CD8-positive, alpha-beta T cell (primary cell): ENCODE measurements at regions of chr21 and their contacts with region 1.

Region 1: DNA sequence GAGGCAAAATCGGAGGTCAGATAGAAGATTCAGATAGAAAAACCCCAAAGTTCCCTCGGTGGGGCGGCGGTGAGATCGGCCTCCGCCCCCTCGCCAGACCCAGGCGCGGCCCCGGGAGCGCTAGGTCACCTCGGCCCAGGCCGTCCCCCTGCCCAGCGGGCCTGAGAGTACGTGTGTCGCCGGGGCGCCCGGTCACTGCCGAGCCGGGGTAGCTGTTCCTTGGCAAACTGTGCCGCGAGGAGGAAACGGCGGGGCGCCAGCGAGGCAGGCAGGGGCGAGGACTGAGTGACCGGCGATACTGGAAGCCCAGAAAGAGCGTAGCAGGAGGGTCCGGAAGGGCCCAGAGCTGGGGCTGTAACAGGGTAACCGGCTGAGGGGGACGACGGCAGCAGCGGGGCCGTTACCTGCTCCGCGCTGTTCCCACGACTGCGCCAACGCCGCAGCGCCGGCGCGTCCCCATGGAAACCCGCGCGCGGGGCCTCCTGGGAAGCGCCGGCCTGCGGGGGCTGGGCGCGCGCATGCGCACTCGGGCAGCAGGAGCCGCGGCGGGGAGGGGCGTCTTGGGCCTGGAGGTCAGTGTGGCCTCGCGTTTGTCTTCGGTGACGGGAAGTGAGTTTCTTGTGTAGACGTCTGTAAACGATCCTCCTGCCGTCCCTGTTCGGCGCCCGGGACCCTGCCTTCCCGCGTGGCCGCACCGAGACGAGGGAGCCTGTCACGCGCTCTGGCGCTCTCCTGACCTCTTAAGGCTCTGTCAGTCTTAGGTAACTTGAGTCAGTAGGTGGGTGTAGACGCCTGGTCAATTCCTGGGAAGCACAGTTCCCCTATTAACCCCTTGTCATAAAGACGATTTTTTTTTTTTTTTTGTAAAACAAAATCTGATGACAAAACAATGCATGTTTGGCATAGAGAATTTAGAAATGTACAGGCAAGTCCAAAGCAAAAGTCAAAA is at the start of gene LCA5L:
- DNase-seq: peak; percentile 73 to 95 (median 87)
- ATAC-seq: peak; percentile 88
- H3K4me3 ChIP-seq: peak within 1 kb of the TSS; percentile 74 to 91
- H3K4me3 Mint-ChIP-seq: peak within 1 kb of the TSS; percentile 97
- H3K27ac ChIP-seq: peak within 1 kb of the TSS; percentile 73 to 84
- H3K27ac Mint-ChIP-seq: peak within 1 kb of the TSS; percentile 95
- H3K4me1 ChIP-seq: peaks cover 5% of the 10 kb centered on the region
- H3K4me1 Mint-ChIP-seq: peaks cover 16% of the 10 kb centered on the region
- H3K27me3 ChIP-seq: no peaks in the 10 kb centered on the region
- H3K27me3 Mint-ChIP-seq: peaks cover 9% of the 10 kb centered on the region
- CTCF ChIP-seq: no peak
- total RNA-seq, gene LCA5L: not detected

Region 2: GRCh38 chr21:38766987-38767722 is 678.4 kb before region 1 on chr21:
- CTCF ChIA-PET with region 1: no interaction called
- POLR2A ChIA-PET with region 1: no interaction called
- intact Hi-C with region 1: loop called in 1 of 2 experiments (anchors 1 kb)
- DNase-seq: peak; percentile 13 to 88 (median 46)
- ATAC-seq: peak; percentile 85
- H3K4me3 ChIP-seq: peak overlapping the region; percentile 54 to 55
- H3K4me3 Mint-ChIP-seq: peak overlapping the region; percentile 82
- H3K27ac ChIP-seq: peak overlapping the region; percentile 69 to 82
- H3K27ac Mint-ChIP-seq: peak overlapping the region; percentile 96
- H3K4me1 ChIP-seq: peaks cover 21% of the 10 kb centered on the region
- H3K4me1 Mint-ChIP-seq: peaks cover 32% of the 10 kb centered on the region
- H3K27me3 ChIP-seq: no peaks in the 10 kb centered on the region
- H3K27me3 Mint-ChIP-seq: no peaks in the 10 kb centered on the region
- CTCF ChIP-seq: no peak

Region 3: GRCh38 chr21:38805328-38806152 is 640.1 kb before region 1 on chr21 and contains the start of gene ETS2:
- CTCF ChIA-PET with region 1: no interaction called
- POLR2A ChIA-PET with region 1: no interaction called
- intact Hi-C with region 1: loop called in 1 of 2 experiments (anchors 5 kb)
- DNase-seq: peak; percentile 33 to 84 (median 63)
- ATAC-seq: peak; percentile 83
- H3K4me3 ChIP-seq: peak within 1 kb of the TSS; percentile 74 to 79
- H3K4me3 Mint-ChIP-seq: peak within 1 kb of the TSS; percentile 84
- H3K27ac ChIP-seq: peak within 1 kb of the TSS; percentile 51 to 59
- H3K27ac Mint-ChIP-seq: peak within 1 kb of the TSS; percentile 73
- H3K4me1 ChIP-seq: peaks cover 8% of the 10 kb centered on the region
- H3K4me1 Mint-ChIP-seq: peaks cover 31% of the 10 kb centered on the region
- H3K27me3 ChIP-seq: no peaks in the 10 kb centered on the region
- H3K27me3 Mint-ChIP-seq: peaks cover 2% of the 10 kb centered on the region
- CTCF ChIP-seq: no peak
- total RNA-seq, gene ETS2: 8.1 to 10.0 TPM

Region 4: DNA sequence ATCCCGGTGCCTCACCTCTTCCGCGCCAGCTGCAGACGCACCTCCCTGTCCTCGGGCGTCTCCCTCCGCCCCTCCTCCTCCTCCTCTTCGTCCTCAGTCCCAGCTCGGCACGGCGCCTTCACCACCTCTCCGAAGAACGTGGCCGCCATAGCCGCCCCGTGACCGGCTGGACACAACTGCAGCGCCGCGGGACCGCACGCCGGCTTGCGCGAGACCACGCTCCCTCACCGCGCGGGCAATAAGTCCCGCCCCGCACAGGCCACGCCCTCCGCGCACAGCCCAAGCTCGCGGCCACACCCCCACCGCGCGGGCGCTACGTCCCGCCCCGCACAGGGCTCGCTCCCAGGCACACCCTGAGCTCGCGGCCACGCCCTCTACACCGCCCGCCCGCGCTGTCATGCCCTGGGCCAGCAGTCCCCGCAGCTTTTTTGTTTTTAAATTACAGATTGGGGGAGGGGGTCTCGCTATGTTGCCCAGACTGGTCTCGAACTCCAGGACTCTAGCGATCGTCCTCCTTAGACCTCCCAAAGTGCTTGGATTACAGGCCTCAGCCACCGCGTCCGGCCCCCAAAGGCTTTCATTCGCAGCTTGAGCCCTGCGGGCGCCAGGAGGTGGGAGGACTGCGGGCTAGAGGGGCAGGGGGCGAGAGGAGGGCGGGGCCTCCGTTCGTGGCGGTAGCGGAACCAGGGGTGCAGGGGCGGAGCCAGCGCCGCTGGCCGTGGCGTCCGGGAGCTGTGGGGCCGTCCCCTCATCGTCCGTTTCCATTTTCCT is 262.2 kb before region 1 on chr21 and contains the start of gene PSMG1:
- CTCF ChIA-PET with region 1: no interaction called
- POLR2A ChIA-PET with region 1: interaction called, 3 read pairs
- intact Hi-C with region 1: loop called (anchors 1 kb)
- DNase-seq: peak; percentile 86 to 97 (median 93)
- ATAC-seq: peak; percentile 92
- H3K4me3 ChIP-seq: peak within 1 kb of the TSS; percentile 88 to 89
- H3K4me3 Mint-ChIP-seq: peak within 1 kb of the TSS; percentile 97
- H3K27ac ChIP-seq: peak within 1 kb of the TSS; percentile 73 to 91
- H3K27ac Mint-ChIP-seq: peak within 1 kb of the TSS; percentile 94
- H3K4me1 ChIP-seq: peaks cover 27% of the 10 kb centered on the region
- H3K4me1 Mint-ChIP-seq: peaks cover 42% of the 10 kb centered on the region
- H3K27me3 ChIP-seq: no peaks in the 10 kb centered on the region
- H3K27me3 Mint-ChIP-seq: no peaks in the 10 kb centered on the region
- CTCF ChIP-seq: no peak
- total RNA-seq, gene PSMG1: 4.7 to 6.8 TPM

Region 5: GRCh38 chr21:39349211-39350093 is 96.1 kb before region 1 on chr21:
- CTCF ChIA-PET with region 1: no interaction called
- POLR2A ChIA-PET with region 1: no interaction called
- intact Hi-C with region 1: loop called (anchors 1 to 2 kb)
- DNase-seq: peak; percentile 91 to 98 (median 97)
- ATAC-seq: peak; percentile 83
- H3K4me3 ChIP-seq: peak overlapping the region; percentile 74 to 75
- H3K4me3 Mint-ChIP-seq: peak overlapping the region; percentile 96
- H3K27ac ChIP-seq: peak overlapping the region; percentile 89 to 95
- H3K27ac Mint-ChIP-seq: peak overlapping the region; percentile 99
- H3K4me1 ChIP-seq: peaks cover 42% of the 10 kb centered on the region
- H3K4me1 Mint-ChIP-seq: peaks cover 38% of the 10 kb centered on the region
- H3K27me3 ChIP-seq: no peaks in the 10 kb centered on the region
- H3K27me3 Mint-ChIP-seq: no peaks in the 10 kb centered on the region
- CTCF ChIP-seq: no peak

Region 6: DNA sequence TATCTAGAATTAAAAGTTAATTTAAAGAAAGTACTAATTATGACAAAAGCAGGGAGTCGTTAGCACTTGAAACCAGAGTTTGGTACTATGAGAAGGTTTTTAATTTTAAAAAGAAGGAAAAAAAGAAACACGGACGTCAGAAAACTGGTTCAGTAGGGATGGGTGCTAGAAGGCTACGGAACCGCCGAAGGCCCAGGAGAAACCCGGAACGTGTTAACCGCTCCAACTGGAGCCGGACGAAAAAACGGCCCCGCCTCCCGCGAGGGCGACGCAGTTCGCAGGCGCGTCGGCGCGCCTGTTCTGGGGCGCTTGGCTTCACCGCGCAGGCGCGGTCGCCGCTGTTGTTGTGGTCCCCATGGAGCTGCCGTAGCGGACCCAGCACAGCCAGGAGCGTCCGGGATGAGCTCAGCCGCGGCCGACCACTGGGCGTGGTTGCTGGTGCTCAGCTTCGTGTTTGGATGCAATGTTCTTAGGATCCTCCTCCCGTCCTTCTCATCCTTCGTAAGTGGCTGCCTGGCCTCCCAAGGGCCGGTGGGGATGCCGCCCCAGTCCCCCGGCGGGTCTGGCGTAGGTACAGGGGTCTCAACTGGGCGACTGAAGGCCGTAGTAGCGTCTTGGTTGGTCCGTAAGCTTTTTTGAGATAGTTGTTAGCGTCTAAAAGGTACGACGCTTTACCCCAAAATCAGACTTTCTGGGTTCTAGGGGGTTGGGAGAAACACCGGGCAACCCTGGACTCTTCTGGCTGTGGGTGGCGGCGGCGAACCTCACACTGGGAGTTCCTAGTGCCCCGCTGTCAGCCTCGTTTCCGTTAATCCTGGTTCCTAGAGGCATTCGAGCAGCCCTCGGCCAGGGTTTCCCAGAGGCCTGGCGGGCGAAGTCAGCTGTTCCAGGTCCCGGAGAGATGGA is 65.4 kb before region 1 on chr21:
- CTCF ChIA-PET with region 1: no interaction called
- POLR2A ChIA-PET with region 1: no interaction called
- intact Hi-C with region 1: loop called in 1 of 2 experiments (anchors 2 kb)
- DNase-seq: peak; percentile 75 to 95 (median 89)
- ATAC-seq: peak; percentile 97
- H3K4me3 ChIP-seq: peak overlapping the region; percentile 70 to 91
- H3K4me3 Mint-ChIP-seq: peak overlapping the region; percentile 93
- H3K27ac ChIP-seq: peak overlapping the region; percentile 80 to 92
- H3K27ac Mint-ChIP-seq: peak overlapping the region; percentile 93
- H3K4me1 ChIP-seq: peaks cover 12% of the 10 kb centered on the region
- H3K4me1 Mint-ChIP-seq: peaks cover 26% of the 10 kb centered on the region
- H3K27me3 ChIP-seq: peaks cover 0 to 2% of the 10 kb centered on the region in 2 experiments
- H3K27me3 Mint-ChIP-seq: peaks cover 4% of the 10 kb centered on the region
- CTCF ChIP-seq: no peak